Caco-2 (cell line): ENCODE measurements at regions of chr7 and their contacts with region 1.

Region 1: GRCh38 chr7:107579885-107580715 is at the start of gene BCAP29:
- DNase-seq: peak; percentile 88 to 91
- H3K4me3 ChIP-seq: peak within 1 kb of the TSS; percentile 79
- H3K4me3 Mint-ChIP-seq: peak within 1 kb of the TSS; percentile 90
- H3K27ac Mint-ChIP-seq: peak within 1 kb of the TSS; percentile 94
- H3K4me1 ChIP-seq: peaks cover 9% of the 10 kb centered on the region
- H3K4me1 Mint-ChIP-seq: peaks cover 7% of the 10 kb centered on the region
- H3K27me3 ChIP-seq: no peaks in the 10 kb centered on the region
- H3K27me3 Mint-ChIP-seq: no peaks in the 10 kb centered on the region
- CTCF ChIP-seq: peak; percentile 14 to 55
- total RNA-seq, gene BCAP29: 30.4 and 35.3 TPM in 2 replicates

Region 2: DNA sequence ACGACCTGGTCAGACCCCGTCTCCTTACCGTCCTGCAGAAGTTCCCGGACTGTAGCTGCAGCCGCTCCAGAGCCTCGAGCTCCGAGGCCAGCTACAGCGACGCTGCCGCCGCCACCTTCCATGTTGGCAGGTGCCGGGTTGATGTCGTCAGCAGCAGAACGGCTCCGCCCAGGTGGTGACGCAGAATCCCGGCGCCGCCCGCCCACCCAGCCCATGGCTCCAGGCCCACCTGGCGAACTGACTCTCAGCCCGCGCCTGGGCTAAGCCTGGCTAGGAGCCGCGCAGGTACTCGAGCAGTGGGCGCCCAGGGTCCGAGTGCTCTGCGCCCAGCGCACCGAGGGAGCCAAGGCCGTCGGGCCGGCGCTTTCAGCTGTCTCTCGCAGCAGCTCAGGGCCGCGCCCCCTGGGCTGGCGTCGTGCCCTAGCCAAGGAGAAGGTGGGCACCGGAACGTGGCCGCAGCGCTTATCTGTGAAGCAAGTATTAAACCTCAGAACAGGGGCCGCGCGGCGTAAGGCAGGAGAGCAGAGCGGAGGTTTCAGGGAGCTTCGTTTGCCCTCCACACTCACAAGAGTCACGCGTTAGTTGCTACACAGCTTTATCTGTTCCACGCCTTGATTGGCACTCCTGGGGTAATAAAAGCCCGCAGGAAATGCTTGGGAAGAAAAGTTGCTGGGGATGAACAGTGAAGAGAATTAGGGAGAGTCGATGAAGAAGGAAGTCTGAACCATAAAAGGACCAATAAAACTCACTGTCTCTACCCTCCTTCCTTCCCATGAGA is 16.1 kb before region 1 on chr7 and contains the starts of genes COG5 and DUS4L:
- CTCF ChIA-PET with region 1: interaction called, 4 read pairs
- POLR2A ChIA-PET with region 1: interaction called, 14 read pairs
- intact Hi-C with region 1: loop called (anchors 1 kb)
- DNase-seq: peak; percentile 84 to 88
- H3K4me3 ChIP-seq: peak within 1 kb of the TSS; percentile 85
- H3K4me3 Mint-ChIP-seq: peak within 1 kb of the TSS; percentile 94
- H3K27ac Mint-ChIP-seq: peak within 1 kb of the TSS; percentile 95
- H3K4me1 ChIP-seq: peaks cover 8% of the 10 kb centered on the region
- H3K4me1 Mint-ChIP-seq: peaks cover 43% of the 10 kb centered on the region
- H3K27me3 ChIP-seq: no peaks in the 10 kb centered on the region
- H3K27me3 Mint-ChIP-seq: no peaks in the 10 kb centered on the region
- CTCF ChIP-seq: no peak
- total RNA-seq, gene COG5: 43.9 and 45.5 TPM in 2 replicates
- total RNA-seq, gene DUS4L: 17.5 and 19.3 TPM in 2 replicates

Region 3: GRCh38 chr7:107661081-107661864 is 81.2 kb after region 1 on chr7:
- CTCF ChIA-PET with region 1: interaction called, 3 read pairs
- POLR2A ChIA-PET with region 1: no interaction called
- intact Hi-C with region 1: loop called (anchors 2 kb)
- DNase-seq: peak; percentile 72 to 74
- H3K4me3 ChIP-seq: peak overlapping the region; percentile 57
- H3K4me3 Mint-ChIP-seq: peak overlapping the region; percentile 78
- H3K27ac Mint-ChIP-seq: no peak overlapping the region
- H3K4me1 ChIP-seq: no peaks in the 10 kb centered on the region
- H3K4me1 Mint-ChIP-seq: peaks cover 5% of the 10 kb centered on the region
- H3K27me3 ChIP-seq: peaks cover 6% of the 10 kb centered on the region; the same call in 1 of the 2 replicates
- H3K27me3 Mint-ChIP-seq: peaks cover 23% of the 10 kb centered on the region
- CTCF ChIP-seq: peak in 1 of 2 experiments; percentile 44